ENCODE measurements at regions of chr4 and their contacts with region 1.

Region 1: DNA sequence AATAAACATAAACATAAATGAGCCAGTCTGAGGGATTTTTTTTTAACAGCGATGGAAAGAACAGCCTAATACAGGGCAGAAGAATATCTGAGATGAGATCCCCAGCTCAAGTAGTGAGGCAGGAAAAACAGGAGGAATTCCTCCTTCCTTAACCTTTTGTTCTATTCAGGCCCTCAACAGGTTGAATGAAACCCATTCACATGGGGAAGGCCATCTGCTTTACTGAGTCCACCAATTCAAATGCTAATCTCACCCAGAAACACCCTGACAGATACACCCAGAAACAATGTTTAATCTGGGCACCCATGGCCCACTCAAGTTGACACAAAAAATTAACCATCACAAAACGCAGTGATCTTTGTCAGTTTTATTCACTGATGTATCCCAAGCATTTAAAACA is 45.5 kb downstream of the SMIM31 start:
- DNase-seq: no peak
- ATAC-seq: no peak
- H3K4me3 ChIP-seq: no peak overlapping the region
- H3K27ac ChIP-seq: no peak overlapping the region
- H3K4me1 ChIP-seq: no peaks in the 10 kb centered on the region
- H3K27me3 ChIP-seq: no peaks in the 10 kb centered on the region
- CTCF ChIP-seq: no peak
- POLR2A ChIP-seq: no peak

Region 2: DNA sequence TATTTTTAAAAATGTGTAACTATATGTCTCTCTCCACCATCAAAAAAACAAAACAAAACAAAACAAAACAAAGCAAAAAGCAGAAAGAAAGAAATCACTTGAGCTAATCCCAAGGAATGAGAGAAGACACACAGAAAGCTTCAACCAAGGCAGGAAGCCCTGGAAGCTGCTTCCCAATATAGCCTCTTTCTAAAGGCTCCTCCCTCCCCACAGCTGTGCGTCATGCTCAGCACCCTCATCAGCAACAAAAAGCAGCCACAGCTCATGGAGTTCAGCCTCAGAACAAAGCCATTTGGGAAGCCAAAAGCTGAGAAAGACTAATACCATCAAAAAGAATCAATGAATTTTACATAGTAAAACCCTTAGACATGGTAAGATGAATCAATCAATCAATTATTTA is 547.1 kb before region 1 on chr4:
- intact Hi-C with region 1: loop called in 1 of 10 experiments (anchors 5 kb)
- DNase-seq: no peak
- ATAC-seq: no peak
- H3K4me3 ChIP-seq: no peak overlapping the region
- H3K27ac ChIP-seq: no peak overlapping the region
- H3K4me1 ChIP-seq: no peaks in the 10 kb centered on the region
- H3K27me3 ChIP-seq: no peaks in the 10 kb centered on the region
- CTCF ChIP-seq: no peak
- POLR2A ChIP-seq: no peak

Region 3: GRCh38 chr4:164768516-164768915 is 30.9 kb before region 1 on chr4:
- intact Hi-C with region 1: no loop called
- DNase-seq: no peak
- ATAC-seq: no peak
- H3K4me3 ChIP-seq: no peak overlapping the region
- H3K27ac ChIP-seq: no peak overlapping the region
- H3K4me1 ChIP-seq: no peaks in the 10 kb centered on the region
- H3K27me3 ChIP-seq: peaks cover 0 to 11% (median 0%) of the 10 kb centered on the region in 9 donors
- CTCF ChIP-seq: peak in 3 of 12 donors; percentile 28 to 34 (median 34)
- POLR2A ChIP-seq: no peak

Measured in heart left ventricle (tissue), 16 donors.